Pancreas (tissue), 10 donors: ENCODE measurements at regions of chr7 and their contacts with region 1.

Region 1: DNA sequence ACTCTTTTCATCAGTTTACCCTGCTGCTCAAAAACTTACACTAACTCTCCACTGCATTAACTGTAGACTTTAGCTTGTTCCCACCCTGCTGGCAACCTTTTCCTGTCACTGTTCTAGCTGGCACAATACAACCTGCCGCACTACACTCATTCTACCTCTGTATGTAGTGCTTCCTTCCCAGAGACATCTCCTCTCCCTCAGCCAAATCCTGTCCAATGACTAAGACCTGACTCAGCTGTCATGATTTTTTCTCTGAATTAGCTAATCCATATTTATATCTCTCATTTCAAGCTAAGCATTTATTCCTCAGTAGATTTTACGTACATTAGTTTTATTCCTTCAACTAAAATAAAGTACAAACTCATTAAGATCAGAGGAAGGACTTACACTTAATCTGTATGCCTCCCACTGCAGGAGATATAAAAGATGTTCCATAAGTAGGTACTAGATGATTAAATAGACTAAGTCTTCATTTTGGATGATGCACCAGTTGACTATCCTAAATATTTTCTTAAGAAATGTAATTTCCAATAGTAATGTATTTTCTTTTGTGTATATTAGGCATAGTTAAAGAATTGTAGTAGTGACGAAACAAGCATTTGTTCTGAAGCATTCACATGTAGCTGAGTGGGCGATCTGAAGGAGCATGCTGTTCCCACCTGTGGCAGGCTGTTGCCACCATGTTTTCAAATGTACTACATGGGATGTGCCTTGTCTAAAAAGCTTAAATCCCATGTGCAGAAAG is 189.1 kb downstream of the SKAP2 start:
- DNase-seq: no peak
- ATAC-seq: no peak
- H3K4me3 ChIP-seq: no peak overlapping the region
- H3K27ac ChIP-seq: no peak overlapping the region
- H3K4me1 ChIP-seq: no peaks in the 10 kb centered on the region
- H3K27me3 ChIP-seq: no peaks in the 10 kb centered on the region
- CTCF ChIP-seq: no peak

Region 2: GRCh38 chr7:25886387-25887240 is 788.7 kb before region 1 on chr7:
- intact Hi-C with region 1: loop called in 2 of 3 experiments (anchors 5 to 10 kb)
- DNase-seq: no peak
- ATAC-seq: no peak
- H3K4me3 ChIP-seq: no peak overlapping the region
- H3K27ac ChIP-seq: no peak overlapping the region
- H3K4me1 ChIP-seq: no peaks in the 10 kb centered on the region
- H3K27me3 ChIP-seq: no peaks in the 10 kb centered on the region
- CTCF ChIP-seq: no peak